A673 (cell line): ENCODE measurements at regions of chr14 and their contacts with region 1.

Region 1: DNA sequence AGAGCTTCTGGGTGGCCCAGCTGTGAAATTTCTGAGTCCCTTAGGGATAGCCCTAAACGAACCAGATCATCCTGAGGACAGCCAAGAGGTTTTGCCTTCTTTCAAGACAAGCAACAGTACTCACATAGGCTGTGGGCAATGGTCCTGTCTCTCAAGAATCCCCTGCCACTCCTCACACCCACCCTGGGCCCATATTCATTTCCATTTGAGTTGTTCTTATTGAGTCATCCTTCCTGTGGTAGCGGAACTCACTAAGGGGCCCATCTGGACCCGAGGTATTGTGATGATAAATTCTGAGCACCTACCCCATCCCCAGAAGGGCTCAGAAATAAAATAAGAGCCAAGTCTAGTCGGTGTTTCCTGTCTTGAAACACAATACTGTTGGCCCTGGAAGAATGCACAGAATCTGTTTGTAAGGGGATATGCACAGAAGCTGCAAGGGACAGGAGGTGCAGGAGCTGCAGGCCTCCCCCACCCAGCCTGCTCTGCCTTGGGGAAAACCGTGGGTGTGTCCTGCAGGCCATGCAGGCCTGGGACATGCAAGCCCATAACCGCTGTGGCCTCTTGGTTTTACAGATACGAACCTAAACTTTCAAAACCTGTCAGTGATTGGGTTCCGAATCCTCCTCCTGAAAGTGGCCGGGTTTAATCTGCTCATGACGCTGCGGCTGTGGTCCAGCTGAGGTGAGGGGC is 38.9 kb downstream of the DAD1 start:
- DNase-seq: peak; percentile 97
- H3K4me3 ChIP-seq: no peak overlapping the region
- H3K27ac ChIP-seq: peak overlapping the region; percentile 86
- H3K4me1 ChIP-seq: peaks cover 85% of the 10 kb centered on the region
- H3K27me3 ChIP-seq: no peaks in the 10 kb centered on the region
- CTCF ChIP-seq: no peak

Region 2: DNA sequence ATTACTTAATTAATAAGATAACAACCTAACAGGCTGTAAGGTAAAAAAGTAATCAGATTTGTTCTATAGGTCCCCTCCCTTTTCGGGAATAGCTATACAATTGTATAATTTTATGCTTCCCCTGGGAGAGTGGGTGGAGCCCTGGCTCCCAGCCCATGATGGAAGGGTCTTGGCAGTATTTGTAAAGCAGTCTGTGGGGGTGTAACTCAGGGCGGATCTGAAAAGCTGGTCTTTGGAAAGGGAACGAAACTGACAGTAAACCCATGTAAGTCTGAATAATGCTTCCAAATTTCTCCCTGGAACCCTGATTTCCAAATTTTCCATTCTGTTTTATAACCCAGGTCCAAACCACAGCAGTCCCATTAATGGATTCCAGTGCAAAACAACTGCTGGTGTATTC is 71.5 kb before region 1 on chr14:
- CTCF ChIA-PET with region 1: interaction called, 3 read pairs
- POLR2A ChIA-PET with region 1: no interaction called
- intact Hi-C with region 1: loop called (anchors 2 kb)
- DNase-seq: peak; percentile 95
- H3K4me3 ChIP-seq: peak overlapping the region; percentile 35
- H3K27ac ChIP-seq: peak overlapping the region; percentile 80
- H3K4me1 ChIP-seq: peaks cover 98% of the 10 kb centered on the region
- H3K27me3 ChIP-seq: no peaks in the 10 kb centered on the region
- CTCF ChIP-seq: no peak

Region 3: GRCh38 chr14:22483863-22484593 is 66.1 kb before region 1 on chr14:
- CTCF ChIA-PET with region 1: interaction called, 3 read pairs
- POLR2A ChIA-PET with region 1: interaction called, 3 read pairs
- intact Hi-C with region 1: loop called (anchors 2 kb)
- DNase-seq: peak; percentile 91
- H3K4me3 ChIP-seq: no peak overlapping the region
- H3K27ac ChIP-seq: peak overlapping the region; percentile 79
- H3K4me1 ChIP-seq: peaks cover 100% of the 10 kb centered on the region
- H3K27me3 ChIP-seq: no peaks in the 10 kb centered on the region
- CTCF ChIP-seq: no peak

Region 4: DNA sequence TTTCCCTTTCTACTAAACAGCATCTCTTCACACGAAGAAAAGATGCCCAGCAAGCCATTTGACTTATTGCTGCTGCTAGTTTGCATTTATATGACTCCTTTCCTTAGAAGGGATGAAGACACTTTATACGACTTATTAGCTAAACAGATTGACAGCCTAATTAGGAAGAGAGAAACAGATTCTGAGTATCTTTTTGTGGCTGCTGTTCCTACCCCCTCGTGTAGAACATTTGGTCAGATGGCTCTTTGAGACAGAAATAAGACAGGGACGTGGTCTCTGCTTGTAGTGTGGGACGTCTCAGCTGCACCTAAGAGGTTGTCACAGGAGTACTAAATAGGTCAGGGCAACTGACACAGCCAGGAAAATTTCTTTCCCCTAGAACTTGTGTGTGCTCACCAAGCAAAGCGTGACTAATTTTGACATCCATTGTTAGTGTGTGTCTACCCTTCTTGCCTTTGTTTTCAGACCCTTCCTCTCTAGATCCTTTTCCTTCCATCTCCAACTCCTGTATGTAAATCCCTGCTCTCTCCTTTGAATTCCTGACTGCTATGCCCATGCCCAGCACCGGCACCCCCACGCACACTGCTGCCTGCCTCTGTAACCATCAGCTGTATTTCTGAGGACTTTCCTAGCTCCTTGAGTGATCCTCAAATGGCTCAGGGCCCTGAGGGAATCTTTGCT is 44.3 kb before region 1 on chr14:
- CTCF ChIA-PET with region 1: no interaction called
- POLR2A ChIA-PET with region 1: interaction called, 3 read pairs
- intact Hi-C with region 1: loop called (anchors 5 kb)
- DNase-seq: peak; percentile 85
- H3K4me3 ChIP-seq: peak overlapping the region; percentile 21
- H3K27ac ChIP-seq: peak overlapping the region; percentile 89
- H3K4me1 ChIP-seq: peaks cover 73% of the 10 kb centered on the region
- H3K27me3 ChIP-seq: no peaks in the 10 kb centered on the region
- CTCF ChIP-seq: no peak

Region 5: DNA sequence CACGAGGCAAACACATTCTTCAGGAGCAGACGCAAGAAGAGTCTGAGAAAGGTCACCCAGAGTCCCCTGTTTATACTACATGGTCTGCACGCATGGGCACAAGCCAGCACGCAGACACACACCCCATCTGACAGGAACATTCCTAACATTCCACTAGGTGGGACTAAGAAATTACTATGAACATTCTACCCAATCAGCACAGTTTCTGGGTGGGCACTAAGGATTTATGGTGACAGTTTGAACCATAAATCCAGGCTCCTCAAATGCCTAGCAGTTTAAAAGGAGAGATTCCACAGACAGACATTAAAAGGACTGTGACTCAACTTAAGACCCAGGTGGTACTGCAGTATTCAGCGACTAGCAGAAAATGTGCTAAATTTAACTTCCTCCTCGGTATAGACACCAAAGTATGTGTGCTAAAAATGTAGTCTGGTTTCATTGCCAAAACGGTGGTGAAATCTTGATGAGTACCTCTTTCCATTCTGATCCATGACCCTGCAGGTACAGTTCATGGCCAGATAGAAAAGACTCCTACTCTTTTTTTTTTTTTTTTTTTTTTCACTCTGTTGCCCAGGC is 64.2 kb after region 1 on chr14:
- CTCF ChIA-PET with region 1: no interaction called
- POLR2A ChIA-PET with region 1: no interaction called
- intact Hi-C with region 1: no loop called
- DNase-seq: peak; percentile 85
- H3K4me3 ChIP-seq: no peak overlapping the region
- H3K27ac ChIP-seq: peak overlapping the region; percentile 52
- H3K4me1 ChIP-seq: peaks cover 13% of the 10 kb centered on the region
- H3K27me3 ChIP-seq: no peaks in the 10 kb centered on the region
- CTCF ChIP-seq: no peak